AG04450 (cell line): ENCODE measurements at regions of chr17 and their contacts with region 1.

Region 1: DNA sequence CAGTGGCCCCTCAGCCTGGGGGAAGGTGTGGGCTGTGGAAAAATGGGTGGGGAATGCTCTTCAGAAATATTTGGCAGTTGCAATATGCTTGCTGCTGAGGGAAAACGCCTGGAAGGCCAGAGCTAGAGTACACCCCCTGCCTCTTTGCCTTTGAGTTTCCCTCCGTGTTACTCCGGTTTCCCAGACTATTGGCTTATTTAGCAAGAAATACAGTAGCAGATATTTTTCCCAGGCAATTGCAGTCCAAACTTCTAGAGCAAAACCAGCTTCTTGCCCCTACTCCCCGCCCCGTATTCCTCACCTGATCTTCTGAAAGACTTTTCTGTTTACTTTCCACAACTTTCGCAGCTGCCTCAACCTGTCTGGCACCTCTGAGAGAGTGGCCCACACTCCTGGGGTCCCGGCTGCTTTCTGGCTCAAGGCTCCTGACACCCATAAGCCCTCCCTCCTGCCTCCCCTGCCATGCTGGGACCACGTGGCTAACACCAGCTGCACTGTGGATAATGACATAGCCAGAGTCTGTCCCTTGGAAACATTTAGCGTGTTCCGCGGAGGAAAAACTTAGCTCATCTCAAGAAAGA is 45.8 kb upstream of the HELZ start:
- DNase-seq: no peak
- H3K4me3 ChIP-seq: no peak overlapping the region
- H3K27ac ChIP-seq: no peak overlapping the region
- H3K27me3 ChIP-seq: no peaks in the 10 kb centered on the region
- CTCF ChIP-seq: no peak

Region 2: DNA sequence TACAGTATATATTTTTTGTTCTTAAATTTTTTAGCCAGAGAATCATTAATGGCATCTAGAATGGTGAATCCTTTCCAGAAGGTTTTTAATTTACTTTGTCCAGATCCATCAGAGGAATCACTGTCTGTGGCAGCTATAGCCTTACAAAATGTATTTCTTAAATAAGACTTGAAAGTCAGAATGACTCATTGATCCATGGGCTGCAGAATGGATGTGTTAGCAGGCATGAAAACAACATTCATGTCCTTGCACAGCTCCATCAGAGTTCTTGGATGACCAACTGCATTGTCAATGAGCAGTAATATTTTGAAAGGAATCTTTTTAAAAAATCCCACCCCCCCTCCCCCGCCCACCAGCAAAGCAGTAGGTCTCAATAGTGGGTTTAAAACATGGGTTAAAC is 195.0 kb before region 1 on chr17:
- CTCF ChIA-PET with region 1: interaction called, 10 read pairs
- POLR2A ChIA-PET with region 1: no interaction called
- DNase-seq: no peak
- H3K4me3 ChIP-seq: no peak overlapping the region
- H3K27ac ChIP-seq: no peak overlapping the region
- H3K27me3 ChIP-seq: no peaks in the 10 kb centered on the region
- CTCF ChIP-seq: no peak

Region 3: DNA sequence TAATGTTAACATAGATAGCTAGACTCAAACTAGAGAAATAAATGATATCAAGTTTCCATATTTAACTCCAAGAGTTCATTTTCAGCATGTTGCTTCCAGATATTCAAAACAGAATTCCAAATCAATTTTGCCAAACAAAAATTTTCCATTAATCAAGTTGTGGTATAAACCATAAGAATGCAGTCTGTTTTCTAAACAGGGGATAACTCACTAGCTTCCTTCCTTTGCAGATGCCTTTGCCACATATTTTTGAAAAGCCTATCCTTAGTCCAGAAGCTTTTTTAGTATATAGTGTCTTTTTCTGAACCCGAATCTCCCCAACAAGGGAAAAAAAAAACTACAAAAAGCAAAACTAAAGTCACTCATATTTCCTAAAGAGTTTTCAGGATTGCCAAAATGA is 107.3 kb before region 1 on chr17:
- CTCF ChIA-PET with region 1: no interaction called
- POLR2A ChIA-PET with region 1: no interaction called
- DNase-seq: no peak
- H3K4me3 ChIP-seq: no peak overlapping the region
- H3K27ac ChIP-seq: no peak overlapping the region
- H3K27me3 ChIP-seq: no peaks in the 10 kb centered on the region
- CTCF ChIP-seq: no peak

Region 4: DNA sequence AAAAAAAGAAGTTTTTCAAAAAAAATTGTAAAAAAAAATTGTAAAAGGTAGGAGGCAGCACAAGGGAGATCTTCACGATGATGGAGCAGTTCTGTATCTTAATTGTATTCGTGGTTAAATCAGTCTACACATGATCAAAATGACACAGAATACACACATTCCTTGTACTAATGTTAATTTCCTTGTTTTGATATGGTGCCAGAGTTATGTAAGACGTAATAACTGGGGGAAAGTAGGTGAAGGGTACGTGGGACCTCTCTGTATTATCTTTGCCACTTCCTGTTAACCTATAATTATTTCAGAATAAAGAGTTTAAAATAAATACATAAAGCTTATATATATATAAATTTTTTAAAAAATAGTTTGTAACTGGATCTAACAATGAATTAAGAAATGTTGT is 82.6 kb before region 1 on chr17:
- CTCF ChIA-PET with region 1: no interaction called
- POLR2A ChIA-PET with region 1: no interaction called
- DNase-seq: no peak
- H3K4me3 ChIP-seq: no peak overlapping the region
- H3K27ac ChIP-seq: no peak overlapping the region
- H3K27me3 ChIP-seq: no peaks in the 10 kb centered on the region
- CTCF ChIP-seq: no peak